ENCODE measurements at regions of chr2 and their contacts with region 1.

Region 1: GRCh38 chr2:68832233-68832869 is 38.8 kb downstream of the BMP10 start:
- DNase-seq: peak; percentile 31 to 47
- ATAC-seq: peak; percentile 57 to 67
- H3K4me3 ChIP-seq: no peak overlapping the region
- H3K27ac ChIP-seq: peak overlapping the region; percentile 72 to 78 (median 74)
- H3K4me1 ChIP-seq: peaks cover 26 to 38% of the 10 kb centered on the region in 2 donors
- H3K27me3 ChIP-seq: no peaks in the 10 kb centered on the region
- CTCF ChIP-seq: no peak
- POLR2A ChIP-seq: peak; percentile 17 to 32

Region 2: DNA sequence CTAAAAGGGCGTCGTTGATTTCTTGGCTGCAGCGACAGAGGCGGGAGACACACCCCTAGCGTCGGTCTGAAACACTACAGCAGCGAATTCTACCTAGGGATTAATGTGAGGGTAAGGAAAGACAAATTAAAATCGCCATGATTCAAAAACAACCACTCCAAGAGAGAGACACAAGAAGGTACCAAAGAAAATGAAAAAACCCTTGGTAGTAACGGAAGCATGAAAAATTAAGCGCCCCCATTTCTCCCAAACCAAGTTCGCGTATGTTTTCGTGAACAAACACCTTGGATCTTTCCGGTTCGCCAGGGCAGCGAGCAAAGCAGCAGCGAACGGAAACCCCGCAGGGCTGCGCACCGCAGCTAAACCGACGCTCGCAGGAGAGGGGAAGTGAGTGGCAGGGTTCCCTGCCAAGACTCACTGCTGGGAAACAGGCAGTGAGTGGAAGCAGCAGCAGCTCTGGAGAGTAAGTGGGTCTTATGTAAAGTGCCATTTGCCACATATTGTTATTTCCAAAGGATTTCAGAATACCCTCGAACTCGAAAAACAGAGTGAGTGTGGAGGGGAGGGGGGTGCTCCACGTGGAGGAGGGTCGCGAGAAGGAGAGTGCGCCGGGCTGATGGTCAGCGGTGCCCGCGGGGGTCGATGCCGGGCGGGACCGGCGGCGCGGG is 581.0 kb before region 1 on chr2:
- in situ Hi-C with region 1: no loop called
- intact Hi-C with region 1: no loop called
- DNase-seq: peak; percentile 66 to 72
- ATAC-seq: peak; percentile 78 to 79
- H3K4me3 ChIP-seq: peak overlapping the region; percentile 84 to 92 (median 90)
- H3K27ac ChIP-seq: peak overlapping the region; percentile 95 to 97 (median 97)
- H3K4me1 ChIP-seq: peaks cover 51 to 54% of the 10 kb centered on the region in 2 donors
- H3K27me3 ChIP-seq: no peaks in the 10 kb centered on the region
- CTCF ChIP-seq: peak; percentile 67 to 79 (median 75)
- POLR2A ChIP-seq: peak in 1 of 2 donors; percentile 12

Region 3: GRCh38 chr2:68766376-68766845 is 65.9 kb before region 1 on chr2:
- in situ Hi-C with region 1: no loop called
- intact Hi-C with region 1: loop called (anchors 5 kb)
- DNase-seq: peak in 1 of 2 donors; percentile 55
- ATAC-seq: peak in 1 of 2 donors; percentile 65
- H3K4me3 ChIP-seq: no peak overlapping the region
- H3K27ac ChIP-seq: peak overlapping the region in 1 of 4 donors; percentile 18
- H3K4me1 ChIP-seq: peaks cover 0 to 8% of the 10 kb centered on the region in 2 donors
- H3K27me3 ChIP-seq: no peaks in the 10 kb centered on the region
- CTCF ChIP-seq: no peak
- POLR2A ChIP-seq: no peak

Region 4: DNA sequence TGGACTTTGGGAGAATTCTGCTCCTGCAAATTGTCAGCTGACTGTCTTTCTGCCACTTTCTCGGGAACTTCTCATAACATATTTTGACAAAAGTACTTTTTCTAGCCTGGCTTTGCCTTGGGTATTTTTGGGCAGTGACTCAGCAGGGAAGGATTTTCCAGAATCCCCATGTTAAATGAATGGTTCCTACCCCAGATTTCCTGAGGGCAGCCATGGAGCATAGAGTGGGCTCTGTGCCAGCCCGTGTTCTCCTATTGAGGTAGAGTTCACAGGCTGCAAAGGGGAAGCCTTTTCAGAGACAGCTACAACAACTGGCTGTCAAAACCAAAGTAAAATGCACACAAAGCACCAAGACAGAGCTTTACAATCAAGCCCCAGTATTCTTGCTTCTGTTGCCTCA is 21.0 kb before region 1 on chr2:
- in situ Hi-C with region 1: no loop called
- intact Hi-C with region 1: no loop called
- DNase-seq: peak in 1 of 2 donors; percentile 24
- ATAC-seq: peak in 1 of 2 donors; percentile 36
- H3K4me3 ChIP-seq: no peak overlapping the region
- H3K27ac ChIP-seq: peak overlapping the region in 3 of 4 donors; percentile 1 to 36 (median 21)
- H3K4me1 ChIP-seq: no peaks in the 10 kb centered on the region
- H3K27me3 ChIP-seq: no peaks in the 10 kb centered on the region
- CTCF ChIP-seq: no peak
- POLR2A ChIP-seq: no peak

Measured in gastrocnemius medialis (tissue), 4 donors.